ENCODE measurements at regions of chr5 and their contacts with region 1.

Region 1: GRCh38 chr5:160508780-160509361 is 87.2 kb downstream of the PTTG1 start:
- DNase-seq: peak; percentile 54 to 57
- H3K4me3 ChIP-seq: no peak overlapping the region
- H3K27ac ChIP-seq: no peak overlapping the region
- H3K4me1 ChIP-seq: peaks cover 6 to 14% of the 10 kb centered on the region in 2 donors
- H3K27me3 ChIP-seq: no peaks in the 10 kb centered on the region
- CTCF ChIP-seq: peak; percentile 75 to 96 (median 89)
- POLR2A ChIP-seq: no peak

Region 2: DNA sequence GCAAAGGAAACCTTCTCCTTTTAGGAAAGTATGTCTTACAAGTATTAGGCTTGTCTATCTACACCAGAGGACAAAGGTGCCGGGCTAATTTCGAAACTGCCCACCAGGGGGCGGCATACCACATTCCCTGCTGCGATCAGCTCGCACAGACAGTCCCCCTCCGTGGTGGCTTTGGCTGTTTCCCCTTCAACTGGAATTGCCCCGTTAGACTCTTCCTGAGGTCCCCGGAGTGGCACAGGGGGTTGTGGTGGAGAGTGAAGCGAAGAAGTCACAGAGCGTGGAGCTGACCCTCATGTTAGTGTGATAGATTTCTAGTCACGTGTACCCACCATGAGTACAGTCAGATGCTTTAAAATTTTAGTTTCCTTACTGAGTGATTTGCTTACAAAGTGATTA is 69.7 kb before region 1 on chr5:
- intact Hi-C with region 1: loop called (anchors 10 kb)
- DNase-seq: peak; percentile 91 to 92
- H3K4me3 ChIP-seq: peak overlapping the region in 2 of 3 donors; percentile 5 to 22
- H3K27ac ChIP-seq: peak overlapping the region; percentile 58 to 72 (median 58)
- H3K4me1 ChIP-seq: peaks cover 18 to 26% of the 10 kb centered on the region in 2 donors
- H3K27me3 ChIP-seq: no peaks in the 10 kb centered on the region
- CTCF ChIP-seq: peak; percentile 84 to 98 (median 90)
- POLR2A ChIP-seq: no peak

Region 3: GRCh38 chr5:160702934-160703333 is 194.1 kb after region 1 on chr5:
- intact Hi-C with region 1: no loop called
- DNase-seq: no peak
- H3K4me3 ChIP-seq: no peak overlapping the region
- H3K27ac ChIP-seq: no peak overlapping the region
- H3K4me1 ChIP-seq: no peaks in the 10 kb centered on the region
- H3K27me3 ChIP-seq: no peaks in the 10 kb centered on the region
- CTCF ChIP-seq: no peak
- POLR2A ChIP-seq: no peak